Heart right ventricle (tissue), 16 donors: ENCODE measurements at regions of chr1 and their contacts with region 1.

Region 1: GRCh38 chr1:162056043-162056442 is 13.4 kb upstream of the NOS1AP start:
- DNase-seq: peak; percentile 30 to 62
- ATAC-seq: peak; percentile 87 to 95 (median 90)
- H3K4me3 ChIP-seq: no peak overlapping the region
- H3K27ac ChIP-seq: no peak overlapping the region
- H3K4me1 ChIP-seq: peaks cover 0 to 3% (median 0%) of the 10 kb centered on the region in 9 donors
- H3K27me3 ChIP-seq: peaks cover 0 to 4% (median 0%) of the 10 kb centered on the region in 7 donors
- CTCF ChIP-seq: peak; percentile 75 to 92 (median 89)

Region 2: DNA sequence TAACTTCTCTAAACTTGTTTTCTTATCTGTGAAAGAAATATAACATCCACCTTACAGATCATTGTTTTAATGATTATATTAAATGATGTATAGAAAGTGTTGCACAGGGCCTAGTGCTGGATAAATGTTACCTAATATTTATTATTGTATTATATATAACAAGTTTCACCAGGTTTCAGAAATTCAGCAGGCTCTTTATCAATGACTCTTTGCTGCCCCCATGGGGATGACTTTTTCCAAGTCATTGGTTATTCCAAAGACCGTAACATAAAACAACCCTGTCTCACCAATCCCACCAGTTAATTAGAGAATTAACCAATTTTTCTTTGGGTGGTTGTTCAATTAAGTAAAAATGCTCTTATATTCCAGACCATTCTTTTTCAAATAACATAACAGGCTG is 916.3 kb before region 1 on chr1:
- intact Hi-C with region 1: no loop called
- DNase-seq: peak in 1 of 2 donors; percentile 51
- ATAC-seq: peak in 2 of 8 donors; percentile 44 to 51
- H3K4me3 ChIP-seq: no peak overlapping the region
- H3K27ac ChIP-seq: no peak overlapping the region
- H3K4me1 ChIP-seq: peaks cover 0 to 36% (median 8%) of the 10 kb centered on the region in 9 donors
- H3K27me3 ChIP-seq: no peaks in the 10 kb centered on the region
- CTCF ChIP-seq: peak in 8 of 9 donors; percentile 22 to 65 (median 61)

Region 3: GRCh38 chr1:161887730-161888287 is 168.2 kb before region 1 on chr1:
- intact Hi-C with region 1: no loop called
- DNase-seq: no peak
- ATAC-seq: no peak
- H3K4me3 ChIP-seq: no peak overlapping the region
- H3K27ac ChIP-seq: peak overlapping the region in 1 of 10 donors; percentile 8
- H3K4me1 ChIP-seq: peaks cover 0 to 11% (median 0%) of the 10 kb centered on the region in 9 donors
- H3K27me3 ChIP-seq: no peaks in the 10 kb centered on the region
- CTCF ChIP-seq: no peak

Region 4: DNA sequence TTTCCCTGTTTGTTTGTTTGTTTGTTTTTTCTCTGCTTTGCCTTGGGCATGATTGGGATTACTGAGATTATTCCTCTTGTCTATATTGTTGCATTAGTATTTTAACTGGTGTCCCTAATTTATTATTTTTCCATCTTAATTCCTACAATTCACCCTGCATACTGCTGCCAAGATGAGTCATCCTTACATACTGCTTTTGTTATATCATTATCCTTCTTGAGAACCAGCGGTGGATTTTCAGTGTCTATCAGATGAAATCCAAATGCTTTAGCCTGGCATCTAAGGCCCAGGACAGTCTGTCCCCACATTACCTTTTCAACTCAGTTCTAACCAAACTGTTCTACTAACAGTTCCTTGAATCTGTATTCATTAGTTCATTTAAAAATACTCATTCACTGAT is 134.1 kb before region 1 on chr1:
- intact Hi-C with region 1: no loop called
- DNase-seq: no peak
- ATAC-seq: no peak
- H3K4me3 ChIP-seq: no peak overlapping the region
- H3K27ac ChIP-seq: no peak overlapping the region
- H3K4me1 ChIP-seq: peaks cover 0 to 3% (median 0%) of the 10 kb centered on the region in 9 donors
- H3K27me3 ChIP-seq: no peaks in the 10 kb centered on the region
- CTCF ChIP-seq: no peak

Region 5: DNA sequence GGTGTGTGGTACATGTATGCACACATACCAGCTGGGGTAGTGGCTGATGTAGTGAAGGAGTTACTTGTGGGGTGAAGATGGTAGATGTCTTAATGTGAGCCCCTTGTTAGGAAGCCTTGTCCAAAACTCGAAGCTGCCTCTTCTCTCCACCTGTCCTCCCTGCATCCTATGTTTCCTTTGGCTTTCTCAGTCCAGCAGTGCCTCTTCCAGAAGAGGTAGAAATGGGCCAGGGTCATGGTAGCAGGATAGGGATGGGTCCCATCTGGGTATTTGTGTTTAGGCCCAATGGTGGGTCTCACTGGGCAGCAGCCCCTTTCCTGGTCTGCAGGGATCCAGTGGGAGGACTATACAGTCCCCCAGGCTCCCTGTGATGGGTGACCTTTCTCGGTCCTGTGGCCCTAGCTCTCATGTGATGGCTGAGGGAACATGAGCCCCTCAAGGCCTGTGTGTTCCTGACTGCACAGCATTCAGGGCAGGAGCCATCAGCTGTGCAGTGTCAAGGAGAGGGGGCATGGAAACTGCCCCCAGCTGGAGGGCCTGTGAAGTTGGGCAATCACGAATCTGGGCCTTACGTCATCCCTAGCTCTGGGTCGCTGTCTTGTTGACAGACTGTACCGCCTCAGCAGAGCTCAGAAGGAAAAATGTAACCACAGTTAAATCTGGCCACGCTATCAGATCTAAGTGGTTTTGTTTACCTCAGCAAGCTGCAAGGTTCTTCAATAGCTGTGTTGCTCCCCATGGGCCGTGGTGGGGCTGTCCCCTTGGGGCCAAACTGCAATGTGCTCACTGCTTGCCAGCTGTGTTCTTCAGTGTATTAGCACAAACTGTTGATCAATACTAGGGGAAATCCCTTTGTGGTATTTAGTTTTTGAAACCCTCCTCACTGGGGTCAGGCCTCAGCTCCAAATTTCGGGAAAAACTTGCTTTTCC is 96.1 kb after region 1 on chr1:
- intact Hi-C with region 1: no loop called
- DNase-seq: no peak
- ATAC-seq: peak in 3 of 8 donors; percentile 7 to 22 (median 12)
- H3K4me3 ChIP-seq: no peak overlapping the region
- H3K27ac ChIP-seq: no peak overlapping the region
- H3K4me1 ChIP-seq: no peaks in the 10 kb centered on the region
- H3K27me3 ChIP-seq: no peaks in the 10 kb centered on the region
- CTCF ChIP-seq: no peak

Region 6: DNA sequence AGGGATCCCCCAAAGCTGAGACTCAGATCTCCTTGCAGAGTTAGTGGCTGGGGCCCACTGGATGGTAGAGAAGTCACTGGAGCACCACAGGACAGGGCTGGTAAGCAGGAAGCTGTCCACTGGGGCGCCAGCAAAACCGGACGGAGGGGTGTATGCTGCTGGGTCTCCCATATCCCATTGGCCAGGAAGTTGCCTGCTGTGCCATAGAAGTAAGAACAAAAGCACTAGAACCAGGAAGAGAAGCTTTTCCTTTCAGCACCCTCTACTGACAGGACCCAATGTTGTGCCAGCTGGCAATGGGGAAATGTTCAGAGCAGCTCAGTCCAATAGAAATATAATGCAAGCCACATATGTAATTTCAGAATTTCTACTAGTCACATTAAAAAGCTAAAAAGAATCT is 174.1 kb after region 1 on chr1:
- intact Hi-C with region 1: loop called in 2 of 10 experiments (anchors 5 to 10 kb)
- DNase-seq: peak in 1 of 2 donors; percentile 18
- ATAC-seq: peak; percentile 59 to 90 (median 82)
- H3K4me3 ChIP-seq: no peak overlapping the region
- H3K27ac ChIP-seq: peak overlapping the region in 3 of 10 donors; percentile 9 to 39 (median 35)
- H3K4me1 ChIP-seq: peaks cover 0 to 19% (median 12%) of the 10 kb centered on the region in 9 donors
- H3K27me3 ChIP-seq: no peaks in the 10 kb centered on the region
- CTCF ChIP-seq: peak in 6 of 9 donors; percentile 14 to 51 (median 38)

Region 7: DNA sequence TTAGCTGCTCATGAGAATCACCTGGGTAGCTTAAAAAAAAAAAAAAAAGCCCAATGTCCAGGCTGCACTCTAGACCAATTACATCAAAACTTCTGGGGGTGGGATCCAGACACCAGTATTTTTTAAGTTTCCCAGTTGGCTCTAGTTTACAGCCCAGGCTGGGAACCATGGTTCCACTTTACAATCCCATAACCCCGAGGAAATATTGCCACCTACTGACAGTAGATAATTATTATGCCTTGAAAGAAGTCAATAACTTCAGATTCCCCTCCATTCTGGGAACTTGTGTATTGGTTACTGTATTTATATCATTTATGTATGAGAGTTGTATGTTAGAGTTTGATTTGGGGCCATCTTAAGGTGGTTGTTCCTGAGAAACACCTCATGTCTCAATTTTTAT is 220.4 kb after region 1 on chr1:
- intact Hi-C with region 1: loop called (anchors 2 to 5 kb)
- DNase-seq: no peak
- ATAC-seq: peak in 2 of 8 donors; percentile 38 to 48
- H3K4me3 ChIP-seq: no peak overlapping the region
- H3K27ac ChIP-seq: no peak overlapping the region
- H3K4me1 ChIP-seq: peaks cover 0 to 8% (median 0%) of the 10 kb centered on the region in 9 donors
- H3K27me3 ChIP-seq: peaks cover 0 to 6% (median 0%) of the 10 kb centered on the region in 7 donors
- CTCF ChIP-seq: peak in 7 of 9 donors; percentile 32 to 58 (median 48)

Region 8: DNA sequence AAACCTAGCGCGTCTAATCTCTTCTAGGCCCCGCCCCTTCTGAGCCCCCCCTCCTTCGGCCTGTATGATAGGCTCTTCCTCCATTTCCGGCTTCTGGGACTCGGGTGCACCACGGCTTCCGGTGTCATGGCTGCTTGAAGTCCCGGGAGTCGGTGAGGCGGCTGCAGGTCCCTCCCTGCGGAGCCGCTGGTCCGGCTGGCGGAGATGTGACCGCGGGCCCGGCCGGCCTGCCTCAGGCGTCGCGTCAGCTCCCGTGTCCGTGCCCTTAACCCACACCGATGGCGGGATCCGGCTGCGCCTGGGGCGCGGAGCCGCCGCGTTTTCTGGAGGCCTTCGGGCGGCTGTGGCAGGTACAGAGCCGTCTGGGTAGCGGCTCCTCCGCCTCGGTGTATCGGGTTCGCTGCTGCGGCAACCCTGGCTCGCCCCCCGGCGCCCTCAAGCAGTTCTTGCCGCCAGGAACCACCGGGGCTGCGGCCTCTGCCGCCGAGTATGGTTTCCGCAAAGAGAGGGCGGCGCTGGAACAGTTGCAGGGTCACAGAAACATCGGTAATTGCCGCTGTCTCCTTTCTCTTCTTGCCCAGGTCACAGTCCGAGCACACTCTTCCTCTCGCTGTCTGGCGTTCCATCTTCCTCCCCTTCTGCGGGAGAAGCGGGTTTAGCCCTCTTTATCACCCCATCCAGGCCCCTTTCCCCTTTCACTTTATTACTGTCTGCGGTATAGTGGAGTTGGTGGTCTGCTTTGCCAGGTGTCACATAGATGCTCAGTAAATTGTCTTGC is 441.9 kb after region 1 on chr1 and contains the start of gene UHMK1:
- intact Hi-C with region 1: loop called in 1 of 10 experiments (anchors 10 kb)
- DNase-seq: peak; percentile 87 to 91
- ATAC-seq: peak; percentile 99 to 100 (median 99)
- H3K4me3 ChIP-seq: peak within 1 kb of the TSS; percentile 67 to 99 (median 94)
- H3K27ac ChIP-seq: peak within 1 kb of the TSS; percentile 75 to 99 (median 95)
- H3K4me1 ChIP-seq: peaks cover 0 to 37% (median 17%) of the 10 kb centered on the region in 9 donors
- H3K27me3 ChIP-seq: no peaks in the 10 kb centered on the region
- CTCF ChIP-seq: no peak
- total RNA-seq, gene UHMK1: 16.9 to 30.6 (median 21.0) TPM